Endothelial cell of umbilical vein (primary cell): ENCODE measurements at regions of chr22 and their contacts with region 1.

Region 1: DNA sequence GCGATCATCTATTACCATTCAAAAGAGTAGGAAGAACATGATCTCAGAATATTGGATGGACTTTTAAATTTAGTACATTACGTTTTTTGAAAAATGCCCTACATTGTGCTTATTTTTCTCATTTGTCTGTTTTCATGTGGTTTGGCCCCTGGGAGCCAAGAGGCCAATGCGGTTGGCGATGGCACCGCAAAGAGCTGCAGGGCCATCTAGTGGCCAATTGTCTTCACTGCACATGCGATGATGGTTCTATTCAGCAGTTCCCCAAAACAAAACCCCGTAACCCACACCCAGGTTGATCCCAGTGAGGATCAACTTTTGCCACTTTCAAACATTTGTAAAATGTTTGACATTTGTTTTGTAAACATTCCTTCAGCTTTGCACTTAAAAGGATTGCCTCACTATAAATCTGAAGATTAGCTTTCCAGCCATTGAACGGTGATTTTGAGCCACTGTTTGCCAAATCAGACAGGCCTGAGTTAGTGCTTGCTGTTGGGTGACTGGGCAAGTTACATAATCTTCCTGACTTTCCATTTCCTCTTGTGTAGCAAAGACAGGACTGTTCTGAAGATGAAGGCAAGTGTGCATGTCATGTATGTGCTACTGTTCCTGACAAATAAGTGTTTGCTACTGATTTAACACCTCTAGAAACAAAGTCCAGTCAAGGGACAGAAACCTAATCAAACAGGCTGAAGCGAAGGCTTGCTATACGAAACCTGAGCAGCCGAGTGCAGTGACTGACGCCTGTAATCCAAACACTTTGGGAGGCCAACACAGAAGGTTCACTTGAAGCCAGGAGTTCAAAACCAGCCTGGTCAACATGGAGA is 29.2 kb upstream of the XBP1 start:
- DNase-seq: peak; percentile 72
- H3K4me3 ChIP-seq: no peak overlapping the region
- H3K27ac ChIP-seq: no peak overlapping the region
- H3K4me1 ChIP-seq: no peaks in the 10 kb centered on the region
- H3K27me3 ChIP-seq: no peaks in the 10 kb centered on the region
- CTCF ChIP-seq: peak; percentile 90 to 97
- POLR2A ChIP-seq: no peak

Region 2: GRCh38 chr22:28541137-28541536 is 288.4 kb before region 1 on chr22:
- CTCF ChIA-PET with region 1: no interaction called
- POLR2A ChIA-PET with region 1: no interaction called
- dilution Hi-C with region 1: no loop called
- intact Hi-C with region 1: no loop called
- DNase-seq: no peak
- H3K4me3 ChIP-seq: no peak overlapping the region
- H3K27ac ChIP-seq: no peak overlapping the region
- H3K4me1 ChIP-seq: no peaks in the 10 kb centered on the region
- H3K27me3 ChIP-seq: no peaks in the 10 kb centered on the region
- CTCF ChIP-seq: no peak
- POLR2A ChIP-seq: no peak

Region 3: GRCh38 chr22:28594797-28595462 is 234.6 kb before region 1 on chr22:
- CTCF ChIA-PET with region 1: interaction called, 246 read pairs
- POLR2A ChIA-PET with region 1: no interaction called
- dilution Hi-C with region 1: no loop called
- intact Hi-C with region 1: loop called (anchors 1 kb)
- DNase-seq: peak; percentile 69
- H3K4me3 ChIP-seq: no peak overlapping the region
- H3K27ac ChIP-seq: no peak overlapping the region
- H3K4me1 ChIP-seq: peaks cover 4% of the 10 kb centered on the region
- H3K27me3 ChIP-seq: no peaks in the 10 kb centered on the region
- CTCF ChIP-seq: peak; percentile 46 to 53
- POLR2A ChIP-seq: no peak

Region 4: DNA sequence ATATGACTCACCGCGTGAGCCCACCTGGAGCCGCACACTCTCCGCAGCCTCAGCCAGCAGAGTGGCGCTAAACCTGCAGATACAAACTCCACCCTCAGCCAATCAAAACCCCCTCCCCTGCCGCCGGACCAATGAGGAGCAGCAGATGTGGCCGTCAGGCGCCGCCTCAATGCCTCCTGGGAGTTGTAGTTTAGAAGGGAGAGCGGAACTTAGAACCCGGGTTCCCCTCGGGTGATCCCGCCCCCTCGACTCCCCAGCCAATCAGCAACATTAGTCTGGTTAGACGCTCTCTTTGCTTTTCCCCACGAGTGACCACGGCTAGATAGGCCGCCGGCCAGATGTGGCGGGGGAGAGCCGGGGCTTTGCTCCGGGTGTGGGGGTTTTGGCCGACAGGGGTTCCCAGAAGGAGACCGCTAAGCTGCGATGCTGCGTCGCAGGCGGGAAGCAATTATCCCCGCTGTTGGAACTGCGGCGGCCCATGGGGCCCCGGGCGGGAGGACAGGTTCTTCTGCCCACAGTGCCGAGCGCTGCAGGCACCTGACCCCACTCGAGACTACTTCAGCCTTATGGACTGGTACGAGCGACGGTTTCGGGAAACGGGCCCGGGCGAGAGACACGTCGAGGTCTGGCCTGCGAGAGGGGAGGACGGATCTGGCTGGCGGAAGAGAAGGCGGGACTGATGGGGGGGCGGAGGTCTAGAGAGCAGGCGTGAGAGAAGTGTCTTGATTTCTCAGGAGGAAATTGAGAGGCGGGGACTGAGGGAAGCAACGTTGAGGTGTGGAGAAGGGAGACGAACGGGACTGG is 87.6 kb before region 1 on chr22 and contains the starts of genes CHEK2 and HSCB:
- CTCF ChIA-PET with region 1: no interaction called
- POLR2A ChIA-PET with region 1: no interaction called
- dilution Hi-C with region 1: no loop called
- intact Hi-C with region 1: no loop called
- DNase-seq: peak; percentile 99
- H3K4me3 ChIP-seq: peak within 1 kb of the TSS; percentile 75 to 87 (median 77)
- H3K27ac ChIP-seq: peak within 1 kb of the TSS; percentile 84
- H3K4me1 ChIP-seq: peaks cover 12% of the 10 kb centered on the region
- H3K27me3 ChIP-seq: no peaks in the 10 kb centered on the region
- CTCF ChIP-seq: peak in 1 of 2 donors; percentile 11
- POLR2A ChIP-seq: no peak
- total RNA-seq, gene CHEK2: 24.6 and 27.4 TPM in 2 replicates
- total RNA-seq, gene HSCB: 14.1 and 20.3 TPM in 2 replicates

Region 5: DNA sequence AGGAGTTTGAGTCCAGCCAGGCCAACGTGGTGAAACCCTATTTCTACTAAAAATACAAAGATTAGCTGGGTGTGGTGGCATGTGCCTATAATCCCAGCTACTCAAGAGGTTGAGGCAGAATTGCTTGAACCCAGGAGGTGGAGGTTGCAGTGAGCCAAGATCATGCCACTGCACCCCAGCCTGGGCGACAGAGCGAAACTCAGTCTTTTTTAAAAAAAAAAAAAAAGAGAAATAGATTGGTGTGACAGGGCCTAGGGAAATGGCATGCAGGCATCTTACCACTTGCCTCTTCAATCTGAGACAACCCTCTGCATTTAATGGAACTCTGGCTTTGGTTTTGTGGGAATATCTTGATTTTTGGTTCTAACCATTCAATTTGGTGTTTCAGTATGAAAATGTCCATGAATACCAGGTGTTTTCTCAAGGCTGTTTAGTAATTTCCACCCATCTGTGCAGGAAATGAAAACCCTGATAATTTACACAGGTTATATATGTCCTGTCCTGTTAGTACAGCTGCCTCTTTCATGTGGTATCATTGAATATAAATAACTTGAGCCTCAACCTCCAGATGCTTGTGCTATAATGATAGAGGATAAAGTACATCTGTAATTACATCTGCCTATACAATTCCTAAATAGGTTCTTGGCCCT is 37.6 kb before region 1 on chr22:
- CTCF ChIA-PET with region 1: interaction called, 34 read pairs
- POLR2A ChIA-PET with region 1: no interaction called
- dilution Hi-C with region 1: no loop called
- intact Hi-C with region 1: loop called (anchors 1 kb)
- DNase-seq: peak; percentile 29
- H3K4me3 ChIP-seq: no peak overlapping the region
- H3K27ac ChIP-seq: no peak overlapping the region
- H3K4me1 ChIP-seq: no peaks in the 10 kb centered on the region
- H3K27me3 ChIP-seq: no peaks in the 10 kb centered on the region
- CTCF ChIP-seq: no peak
- POLR2A ChIP-seq: no peak

Region 6: DNA sequence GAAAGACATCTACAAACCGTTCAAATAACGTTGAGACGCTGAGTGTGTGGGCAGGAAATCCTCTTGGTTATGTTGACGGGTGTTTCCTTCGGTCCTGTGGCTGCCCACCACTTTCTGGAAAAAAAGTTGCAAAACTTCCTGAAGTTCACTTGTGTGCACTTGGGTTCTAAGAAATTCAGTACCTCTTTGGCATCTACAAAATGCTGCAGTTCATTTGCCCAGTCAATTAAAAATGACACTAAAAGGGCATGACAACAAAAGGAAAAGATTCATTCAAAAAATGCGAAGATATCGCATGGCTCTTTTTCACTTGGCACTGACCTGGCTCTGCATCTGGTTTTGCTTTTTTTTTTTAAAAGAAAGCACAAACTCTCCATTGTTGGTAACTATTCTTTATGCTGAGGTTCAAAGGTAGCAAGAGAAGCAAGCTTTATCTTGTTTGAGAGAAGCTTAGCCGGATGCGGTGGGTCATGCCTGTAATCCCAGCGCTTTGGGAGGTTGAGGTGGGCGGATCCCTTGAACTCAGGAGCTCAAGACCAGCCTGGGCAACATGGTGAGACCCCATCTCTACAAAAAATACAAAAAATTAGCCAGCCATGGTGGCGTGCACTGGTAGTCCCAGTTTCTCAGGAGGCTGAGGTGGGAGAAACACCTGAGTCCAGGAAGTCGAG is 18.6 kb before region 1 on chr22:
- CTCF ChIA-PET with region 1: interaction called, 13 read pairs
- POLR2A ChIA-PET with region 1: no interaction called
- dilution Hi-C with region 1: no loop called
- intact Hi-C with region 1: no loop called
- DNase-seq: peak; percentile 88
- H3K4me3 ChIP-seq: peak overlapping the region in 1 of 3 experiments; percentile 2
- H3K27ac ChIP-seq: no peak overlapping the region
- H3K4me1 ChIP-seq: peaks cover 10% of the 10 kb centered on the region
- H3K27me3 ChIP-seq: no peaks in the 10 kb centered on the region
- CTCF ChIP-seq: no peak
- POLR2A ChIP-seq: no peak